Activated B cell treated with CpG ODN at 0.5 μM for 24 hours (primary cell): ENCODE measurements at regions of chr15 and their contacts with region 1.

Region 1: DNA sequence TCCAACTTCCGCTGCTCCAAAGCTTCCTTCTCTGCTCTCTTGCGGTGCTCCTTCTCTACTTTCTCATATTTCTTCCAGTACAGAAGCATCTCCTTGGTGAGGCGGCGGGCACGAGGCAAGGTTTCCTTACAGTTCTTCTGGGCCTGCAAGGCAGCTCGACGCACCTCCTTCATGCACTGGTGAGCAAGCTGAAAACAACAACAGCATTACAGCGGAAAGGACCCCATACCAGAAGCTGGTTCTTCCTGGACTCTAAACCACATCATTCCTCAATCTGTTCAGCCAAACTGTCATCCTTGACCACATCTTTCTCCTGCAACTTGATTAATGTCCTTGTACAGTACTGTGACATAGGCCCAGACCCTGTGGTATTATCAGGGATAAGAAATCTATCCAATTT is 36.4 kb downstream of the INO80 start:
- DNase-seq: no peak
- ATAC-seq: peak; percentile 67
- H3K4me3 Mint-ChIP-seq: peak overlapping the region; percentile 16
- H3K27ac Mint-ChIP-seq: peak overlapping the region; percentile 88
- H3K4me1 Mint-ChIP-seq: peaks cover 23% of the 10 kb centered on the region
- H3K27me3 Mint-ChIP-seq: no peaks in the 10 kb centered on the region
- CTCF ChIP-seq: no peak

Region 2: GRCh38 chr15:40873625-40874561 is 205.8 kb before region 1 on chr15 and contains the start of gene RHOV:
- CTCF ChIA-PET with region 1: no interaction called
- POLR2A ChIA-PET with region 1: no interaction called
- intact Hi-C with region 1: no loop called
- DNase-seq: peak; percentile 51
- ATAC-seq: peak; percentile 77
- H3K4me3 Mint-ChIP-seq: peak within 1 kb of the TSS; percentile 77
- H3K27ac Mint-ChIP-seq: no peak within 1 kb of the TSS
- H3K4me1 Mint-ChIP-seq: peaks cover 28% of the 10 kb centered on the region
- H3K27me3 Mint-ChIP-seq: peaks cover 2% of the 10 kb centered on the region
- CTCF ChIP-seq: no peak
- total RNA-seq, gene RHOV: 0.27 TPM in 1 of 2 replicates, not detected in the other

Region 3: GRCh38 chr15:41106947-41107346 is 27.2 kb after region 1 on chr15:
- CTCF ChIA-PET with region 1: no interaction called
- POLR2A ChIA-PET with region 1: interaction called, 11 read pairs
- intact Hi-C with region 1: no loop called
- DNase-seq: no peak
- ATAC-seq: peak; percentile 14
- H3K4me3 Mint-ChIP-seq: no peak overlapping the region
- H3K27ac Mint-ChIP-seq: no peak overlapping the region
- H3K4me1 Mint-ChIP-seq: peaks cover 27% of the 10 kb centered on the region
- H3K27me3 Mint-ChIP-seq: no peaks in the 10 kb centered on the region
- CTCF ChIP-seq: no peak